IMR-90 (cell line): ENCODE measurements at regions of chr12 and their contacts with region 1.

Region 1: GRCh38 chr12:3034067-3034750 is 43.0 kb upstream of the TSPAN9 start:
- DNase-seq: peak; percentile 71
- ATAC-seq: peak; percentile 98
- H3K4me3 ChIP-seq: no peak overlapping the region
- H3K27ac ChIP-seq: no peak overlapping the region
- H3K4me1 ChIP-seq: peaks cover 3% of the 10 kb centered on the region; the same call in 1 of the 2 replicates
- H3K27me3 ChIP-seq: no peaks in the 10 kb centered on the region
- CTCF ChIP-seq: peak; percentile 73
- POLR2A ChIP-seq: no peak
- RAD21 ChIP-seq: peak; percentile 83

Region 2: GRCh38 chr12:2853626-2854025 is 180.6 kb before region 1 on chr12:
- CTCF ChIA-PET with region 1: interaction called, 4 read pairs
- POLR2A ChIA-PET with region 1: no interaction called
- dilution Hi-C with region 1: no loop called
- in situ Hi-C with region 1: loop called (anchors 10 kb)
- intact Hi-C with region 1: loop called (anchors 2 kb)
- DNase-seq: peak; percentile 74
- ATAC-seq: peak; percentile 89
- H3K4me3 ChIP-seq: no peak overlapping the region
- H3K27ac ChIP-seq: no peak overlapping the region
- H3K4me1 ChIP-seq: peaks cover 5% of the 10 kb centered on the region
- H3K27me3 ChIP-seq: no peaks in the 10 kb centered on the region
- CTCF ChIP-seq: peak; percentile 86
- POLR2A ChIP-seq: no peak
- RAD21 ChIP-seq: peak; percentile 69

Region 3: DNA sequence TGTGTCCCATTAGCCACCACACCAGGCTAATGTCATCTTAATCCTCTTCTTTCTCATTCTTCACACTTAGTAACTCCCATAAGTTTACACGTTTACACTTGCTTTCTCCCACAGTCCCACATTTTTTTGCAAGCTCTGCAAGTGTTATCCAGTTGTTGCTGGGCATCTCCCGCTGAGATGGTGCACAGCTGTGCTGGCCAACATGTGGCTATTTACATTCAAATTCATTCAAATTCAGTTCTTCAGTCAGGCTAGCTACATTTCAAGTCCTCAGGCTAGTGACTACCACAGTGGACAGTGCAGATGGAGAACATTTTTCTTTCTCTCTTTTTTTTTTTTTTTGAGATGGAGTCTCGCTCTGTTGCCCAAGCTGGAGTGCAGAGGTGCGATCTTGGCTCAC is 84.8 kb before region 1 on chr12:
- CTCF ChIA-PET with region 1: no interaction called
- POLR2A ChIA-PET with region 1: no interaction called
- dilution Hi-C with region 1: no loop called
- in situ Hi-C with region 1: no loop called
- intact Hi-C with region 1: no loop called
- DNase-seq: no peak
- ATAC-seq: no peak
- H3K4me3 ChIP-seq: no peak overlapping the region
- H3K27ac ChIP-seq: no peak overlapping the region
- H3K4me1 ChIP-seq: peaks cover under 1% of the 10 kb centered on the region; the same call in 1 of the 2 replicates
- H3K27me3 ChIP-seq: no peaks in the 10 kb centered on the region
- CTCF ChIP-seq: no peak
- POLR2A ChIP-seq: no peak
- RAD21 ChIP-seq: no peak

Region 4: GRCh38 chr12:2959505-2960389 is 74.5 kb before region 1 on chr12:
- CTCF ChIA-PET with region 1: interaction called, 3 read pairs
- POLR2A ChIA-PET with region 1: no interaction called
- dilution Hi-C with region 1: no loop called
- in situ Hi-C with region 1: no loop called
- intact Hi-C with region 1: loop called (anchors 2 kb)
- DNase-seq: peak; percentile 60
- ATAC-seq: peak; percentile 56
- H3K4me3 ChIP-seq: peak overlapping the region; percentile 93
- H3K27ac ChIP-seq: peak overlapping the region; percentile 91
- H3K4me1 ChIP-seq: peaks cover 18% of the 10 kb centered on the region
- H3K27me3 ChIP-seq: no peaks in the 10 kb centered on the region
- CTCF ChIP-seq: no peak
- POLR2A ChIP-seq: peak; percentile 63
- RAD21 ChIP-seq: no peak

Region 5: DNA sequence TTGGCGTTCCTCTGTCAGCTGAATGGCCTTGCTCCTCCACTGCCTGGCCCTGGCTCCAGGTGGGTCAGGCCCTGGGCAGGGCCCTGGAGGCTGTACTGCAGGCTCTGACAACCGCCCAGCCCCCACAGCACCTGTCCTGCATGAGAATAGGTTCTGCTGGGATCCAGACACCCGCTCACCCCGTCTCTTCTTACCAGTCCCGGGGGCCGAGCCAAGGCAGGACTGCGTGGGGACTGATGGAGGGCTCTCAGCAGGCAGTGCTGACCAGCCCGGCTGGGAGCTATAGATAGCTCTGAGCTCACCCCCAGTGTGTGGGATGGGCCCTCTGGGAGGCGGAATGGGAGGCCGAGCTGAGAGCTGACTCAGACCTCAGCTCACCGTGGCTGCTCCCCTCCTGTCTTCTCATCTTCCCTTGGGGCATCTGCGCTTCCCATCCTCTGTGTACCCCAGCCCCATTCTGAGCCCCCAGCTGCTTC is 35.4 kb before region 1 on chr12:
- CTCF ChIA-PET with region 1: no interaction called
- POLR2A ChIA-PET with region 1: no interaction called
- dilution Hi-C with region 1: no loop called
- in situ Hi-C with region 1: no loop called
- intact Hi-C with region 1: no loop called
- DNase-seq: peak; percentile 88
- ATAC-seq: peak; percentile 99
- H3K4me3 ChIP-seq: no peak overlapping the region
- H3K27ac ChIP-seq: no peak overlapping the region
- H3K4me1 ChIP-seq: peaks cover 7% of the 10 kb centered on the region
- H3K27me3 ChIP-seq: no peaks in the 10 kb centered on the region
- CTCF ChIP-seq: no peak
- POLR2A ChIP-seq: no peak
- RAD21 ChIP-seq: no peak